ENCODE measurements at regions of chr1 and their contacts with region 1.

Region 1: GRCh38 chr1:11805447-11806306 is at the starts of genes CLCN6 and MTHFR:
- DNase-seq: peak; percentile 99
- ATAC-seq: peak; percentile 84
- H3K4me3 Mint-ChIP-seq: peak within 1 kb of the TSS; percentile 95
- H3K27ac Mint-ChIP-seq: peak within 1 kb of the TSS; percentile 97
- H3K4me1 Mint-ChIP-seq: peaks cover 78% of the 10 kb centered on the region
- H3K27me3 Mint-ChIP-seq: no peaks in the 10 kb centered on the region
- CTCF ChIP-seq: no peak
- total RNA-seq, gene CLCN6: 66.0 and 79.6 TPM in 2 replicates
- total RNA-seq, gene MTHFR: 54.1 and 56.9 TPM in 2 replicates

Region 2: DNA sequence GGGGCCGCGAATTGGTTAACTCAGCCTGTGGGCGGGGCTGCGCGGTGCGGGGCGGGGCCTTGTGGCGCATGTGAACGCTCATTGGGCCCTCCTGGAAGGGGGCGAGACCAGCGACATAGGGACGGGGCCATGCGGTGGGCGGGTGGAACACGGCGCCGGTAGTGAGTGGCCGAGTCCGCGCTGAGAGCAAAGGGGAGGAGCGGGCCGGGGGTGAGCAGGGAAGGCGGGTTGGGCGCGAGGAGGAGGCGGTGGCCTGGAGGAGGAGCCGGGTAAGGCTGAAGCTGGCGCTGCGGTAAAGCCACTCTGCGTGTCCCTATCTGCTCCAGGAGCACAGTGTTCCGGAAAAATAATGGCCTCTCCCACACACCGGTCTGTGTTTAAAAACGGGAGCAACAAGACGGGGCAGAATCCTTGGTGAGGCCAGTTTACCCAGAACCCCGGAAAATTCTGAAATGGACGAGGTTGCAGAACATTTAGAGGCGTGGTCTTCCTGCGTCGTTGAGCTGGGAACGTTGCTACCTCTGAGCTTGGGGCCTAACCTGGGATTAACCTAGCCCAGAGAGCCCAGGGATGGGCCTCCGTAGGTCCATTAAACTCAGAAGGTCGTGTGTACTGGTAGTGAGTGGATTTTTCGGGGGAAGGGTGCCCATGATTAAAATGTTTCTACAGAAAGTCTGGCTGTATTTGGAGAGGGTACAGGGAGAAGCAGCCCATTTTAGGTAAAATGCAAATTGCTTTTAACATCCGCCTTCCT is 1895.1 kb before region 1 on chr1:
- CTCF ChIA-PET with region 1: no interaction called
- POLR2A ChIA-PET with region 1: no interaction called
- intact Hi-C with region 1: loop called (anchors 5 kb)
- DNase-seq: no peak
- ATAC-seq: peak; percentile 90
- H3K4me3 Mint-ChIP-seq: peak overlapping the region; percentile 97
- H3K27ac Mint-ChIP-seq: peak overlapping the region; percentile 99
- H3K4me1 Mint-ChIP-seq: peaks cover 22% of the 10 kb centered on the region
- H3K27me3 Mint-ChIP-seq: no peaks in the 10 kb centered on the region
- CTCF ChIP-seq: no peak

Region 3: GRCh38 chr1:10189659-10190058 is 1616.0 kb before region 1 on chr1:
- CTCF ChIA-PET with region 1: no interaction called
- POLR2A ChIA-PET with region 1: no interaction called
- intact Hi-C with region 1: no loop called
- DNase-seq: no peak
- ATAC-seq: peak; percentile 61
- H3K4me3 Mint-ChIP-seq: no peak overlapping the region
- H3K27ac Mint-ChIP-seq: no peak overlapping the region
- H3K4me1 Mint-ChIP-seq: peaks cover 5% of the 10 kb centered on the region
- H3K27me3 Mint-ChIP-seq: no peaks in the 10 kb centered on the region
- CTCF ChIP-seq: no peak

Region 4: DNA sequence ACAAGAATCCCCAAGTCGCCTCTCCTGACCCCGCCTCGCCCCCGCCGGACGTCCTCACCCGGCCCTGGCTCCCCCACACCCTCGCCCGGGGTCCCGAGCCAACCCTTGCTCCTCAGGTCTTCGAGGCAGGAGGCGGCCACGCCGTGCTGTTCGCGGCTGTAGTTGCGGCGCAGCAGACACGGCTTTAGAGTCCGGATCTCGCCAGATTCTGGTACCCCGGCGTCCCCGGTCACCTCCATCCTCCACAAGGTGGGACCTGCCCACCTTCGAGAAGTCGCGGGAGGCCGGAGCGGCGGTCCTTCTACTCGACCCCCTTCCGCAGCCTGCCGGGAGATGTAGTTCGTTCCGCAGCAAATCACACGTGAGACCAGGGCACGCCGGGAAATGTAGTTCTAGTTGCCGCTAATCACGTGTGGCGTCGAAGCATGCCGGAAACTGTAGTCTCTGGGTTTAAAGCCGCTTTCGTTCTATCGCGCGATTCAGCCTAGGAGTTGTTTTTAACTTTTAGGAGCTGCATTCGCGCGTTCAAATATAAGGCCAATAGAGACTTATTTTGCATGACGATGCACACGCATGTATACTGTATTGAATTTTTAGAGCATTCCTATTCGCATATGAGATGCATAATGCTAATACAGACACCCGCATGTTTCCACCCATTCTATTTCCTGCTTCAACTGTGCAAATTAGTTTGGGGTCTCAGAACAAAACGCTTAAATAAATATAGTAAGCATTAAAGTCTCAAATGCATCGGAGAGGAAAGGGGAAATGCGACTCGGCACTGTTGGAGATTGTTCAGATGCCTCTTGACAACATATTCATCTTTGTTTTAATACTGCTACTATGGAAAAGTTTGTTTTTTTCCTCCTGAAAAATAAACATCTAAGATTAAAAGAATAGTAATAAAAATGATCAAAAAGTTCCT is 1333.2 kb before region 1 on chr1 and contains the start of gene DFFA:
- CTCF ChIA-PET with region 1: no interaction called
- POLR2A ChIA-PET with region 1: no interaction called
- intact Hi-C with region 1: loop called (anchors 10 kb)
- DNase-seq: peak; percentile 82
- ATAC-seq: peak; percentile 78
- H3K4me3 Mint-ChIP-seq: peak within 1 kb of the TSS; percentile 94
- H3K27ac Mint-ChIP-seq: peak within 1 kb of the TSS; percentile 90
- H3K4me1 Mint-ChIP-seq: peaks cover 51% of the 10 kb centered on the region
- H3K27me3 Mint-ChIP-seq: no peaks in the 10 kb centered on the region
- CTCF ChIP-seq: no peak
- total RNA-seq, gene DFFA: 34.3 and 39.0 TPM in 2 replicates

Region 5: GRCh38 chr1:11645670-11646265 is 159.9 kb before region 1 on chr1:
- CTCF ChIA-PET with region 1: no interaction called
- POLR2A ChIA-PET with region 1: no interaction called
- intact Hi-C with region 1: loop called (anchors 5 kb)
- DNase-seq: peak; percentile 66
- ATAC-seq: peak; percentile 48
- H3K4me3 Mint-ChIP-seq: no peak overlapping the region
- H3K27ac Mint-ChIP-seq: no peak overlapping the region
- H3K4me1 Mint-ChIP-seq: peaks cover 15% of the 10 kb centered on the region
- H3K27me3 Mint-ChIP-seq: peaks cover 2% of the 10 kb centered on the region
- CTCF ChIP-seq: no peak

Region 6: GRCh38 chr1:11784993-11785769 is 20.5 kb before region 1 on chr1:
- CTCF ChIA-PET with region 1: interaction called, 7 read pairs
- POLR2A ChIA-PET with region 1: interaction called, 6 read pairs
- intact Hi-C with region 1: loop called (anchors 2 kb)
- DNase-seq: peak; percentile 55
- ATAC-seq: peak; percentile 86
- H3K4me3 Mint-ChIP-seq: peak overlapping the region; percentile 44
- H3K27ac Mint-ChIP-seq: peak overlapping the region; percentile 71
- H3K4me1 Mint-ChIP-seq: peaks cover 22% of the 10 kb centered on the region
- H3K27me3 Mint-ChIP-seq: no peaks in the 10 kb centered on the region
- CTCF ChIP-seq: peak; percentile 88

Region 7: GRCh38 chr1:12161662-12162458 is 356.2 kb after region 1 on chr1:
- CTCF ChIA-PET with region 1: no interaction called
- POLR2A ChIA-PET with region 1: no interaction called
- intact Hi-C with region 1: loop called (anchors 5 kb)
- DNase-seq: peak; percentile 55
- ATAC-seq: peak; percentile 78
- H3K4me3 Mint-ChIP-seq: peak overlapping the region; percentile 63
- H3K27ac Mint-ChIP-seq: peak overlapping the region; percentile 91
- H3K4me1 Mint-ChIP-seq: peaks cover 74% of the 10 kb centered on the region
- H3K27me3 Mint-ChIP-seq: no peaks in the 10 kb centered on the region
- CTCF ChIP-seq: no peak